Activated naive CD4-positive, alpha-beta T cell treated with anti-CD3 and anti-CD28 coated beads for 36 hours (primary cell): ENCODE measurements at regions of chr2 and their contacts with region 1.

Region 1: GRCh38 chr2:203814661-203815540 is 52.7 kb upstream of the CTLA4 start:
- DNase-seq: peak; percentile 77
- H3K4me3 Mint-ChIP-seq: peak overlapping the region; percentile 54
- H3K27ac Mint-ChIP-seq: no peak overlapping the region
- H3K4me1 Mint-ChIP-seq: peaks cover 54% of the 10 kb centered on the region
- H3K27me3 Mint-ChIP-seq: no peaks in the 10 kb centered on the region

Region 2: DNA sequence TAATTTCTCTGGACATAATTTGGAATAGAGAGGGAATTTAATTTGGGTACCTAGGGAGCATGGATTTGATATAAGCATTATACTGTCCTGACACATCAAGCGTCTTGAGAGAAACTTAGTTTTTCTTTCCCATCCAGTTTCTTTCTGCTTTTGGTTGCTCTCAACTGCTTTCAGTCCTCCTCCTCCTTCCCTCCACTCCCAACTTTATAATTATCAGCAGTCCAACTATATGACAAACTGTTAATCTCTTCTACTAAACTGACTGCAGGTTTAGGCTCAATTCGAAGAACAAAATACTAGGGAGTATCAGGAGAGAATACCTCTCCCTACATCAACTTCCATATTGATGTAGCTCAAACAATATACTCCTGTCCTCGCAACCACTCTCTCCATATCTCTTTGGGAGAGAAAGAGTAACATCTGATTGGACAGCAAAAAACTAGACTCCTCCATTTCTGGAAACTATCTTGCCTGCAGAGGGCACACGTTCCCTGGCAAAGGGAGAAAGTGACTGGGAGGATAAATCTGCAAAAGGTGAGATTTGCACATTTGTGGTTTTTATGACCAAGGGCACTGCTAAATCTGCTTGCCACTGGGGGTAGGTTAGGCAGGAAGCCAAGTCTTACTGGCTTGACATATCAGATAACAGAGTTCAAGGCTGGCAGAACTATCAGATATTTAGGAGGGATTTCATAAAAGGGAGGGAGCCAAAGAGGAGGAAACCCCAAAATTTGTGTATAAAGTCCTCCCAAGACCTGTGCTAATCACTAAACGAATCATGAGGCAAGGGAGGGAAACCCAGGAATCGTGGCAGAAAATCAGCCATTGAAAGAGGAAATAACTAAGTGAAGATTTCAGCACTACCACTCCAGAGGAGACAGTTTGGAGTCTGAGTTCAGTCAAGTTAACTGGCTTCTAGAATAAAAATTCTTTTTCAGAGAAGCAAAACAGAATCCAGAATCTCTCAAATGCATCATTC is 983.4 kb before region 1 on chr2:
- CTCF ChIA-PET with region 1: no interaction called
- intact Hi-C with region 1: loop called (anchors 1 kb)
- DNase-seq: peak; percentile 80
- H3K4me3 Mint-ChIP-seq: no peak overlapping the region
- H3K27ac Mint-ChIP-seq: no peak overlapping the region
- H3K4me1 Mint-ChIP-seq: peaks cover 10% of the 10 kb centered on the region
- H3K27me3 Mint-ChIP-seq: no peaks in the 10 kb centered on the region

Region 3: DNA sequence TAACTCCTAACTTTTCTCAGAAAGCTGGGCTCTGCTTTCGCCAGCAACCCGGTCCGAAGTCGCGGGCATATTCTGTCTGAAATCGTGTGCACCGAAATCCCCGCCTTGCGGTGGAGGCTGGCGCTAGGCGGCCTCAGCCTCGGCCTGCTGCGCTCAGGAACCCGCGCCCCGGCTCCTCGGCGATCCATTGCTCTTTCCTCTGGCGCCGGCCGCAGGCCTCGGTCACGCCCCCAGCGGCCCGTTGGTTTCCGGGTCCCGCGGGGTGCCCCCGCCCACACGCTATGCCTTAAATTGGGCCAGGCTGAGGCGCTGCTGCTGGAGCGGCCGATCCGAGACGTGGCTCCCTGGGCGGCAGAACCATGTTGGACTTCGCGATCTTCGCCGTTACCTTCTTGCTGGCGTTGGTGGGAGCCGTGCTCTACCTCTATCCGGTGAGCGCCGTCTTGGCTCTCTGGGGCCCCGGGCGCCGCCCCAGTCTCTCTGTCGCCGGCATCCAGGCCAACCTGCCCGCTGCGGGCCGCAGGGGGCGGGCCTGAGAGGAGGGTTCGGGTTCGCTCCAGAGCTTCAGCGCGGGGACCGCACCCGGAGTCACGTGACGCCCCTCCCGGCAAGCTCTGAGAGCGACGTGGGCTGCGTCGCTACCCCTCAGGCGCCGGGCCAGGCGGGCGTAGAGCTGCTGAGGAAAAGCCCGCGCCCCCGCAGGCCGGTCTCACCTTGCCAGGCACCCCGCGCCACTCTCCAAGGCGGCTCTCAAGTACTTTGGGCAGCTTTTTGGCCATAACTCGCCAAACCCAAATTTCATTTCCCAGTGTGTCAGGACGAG is 576.0 kb before region 1 on chr2 and contains the start of gene CYP20A1:
- CTCF ChIA-PET with region 1: interaction called, 3 read pairs
- intact Hi-C with region 1: loop called (anchors 2 kb)
- DNase-seq: peak; percentile 97
- H3K4me3 Mint-ChIP-seq: peak within 1 kb of the TSS; percentile 94
- H3K27ac Mint-ChIP-seq: peak within 1 kb of the TSS; percentile 98
- H3K4me1 Mint-ChIP-seq: peaks cover 35% of the 10 kb centered on the region
- H3K27me3 Mint-ChIP-seq: no peaks in the 10 kb centered on the region
- total RNA-seq, gene CYP20A1: 12.0 to 12.2 TPM

Region 4: GRCh38 chr2:203535078-203535783 is 279.7 kb before region 1 on chr2 and contains the start of gene RAPH1:
- CTCF ChIA-PET with region 1: interaction called, 4 read pairs
- intact Hi-C with region 1: loop called (anchors 2 kb)
- DNase-seq: peak; percentile 79
- H3K4me3 Mint-ChIP-seq: peak within 1 kb of the TSS; percentile 82
- H3K27ac Mint-ChIP-seq: peak within 1 kb of the TSS; percentile 61
- H3K4me1 Mint-ChIP-seq: peaks cover 21% of the 10 kb centered on the region
- H3K27me3 Mint-ChIP-seq: peaks cover 6% of the 10 kb centered on the region
- total RNA-seq, gene RAPH1: 8.6 to 11.9 TPM

Region 5: GRCh38 chr2:203669820-203670219 is 145.1 kb before region 1 on chr2:
- CTCF ChIA-PET with region 1: no interaction called
- intact Hi-C with region 1: no loop called
- DNase-seq: no peak
- H3K4me3 Mint-ChIP-seq: no peak overlapping the region
- H3K27ac Mint-ChIP-seq: no peak overlapping the region
- H3K4me1 Mint-ChIP-seq: peaks cover 14% of the 10 kb centered on the region
- H3K27me3 Mint-ChIP-seq: no peaks in the 10 kb centered on the region

Region 6: DNA sequence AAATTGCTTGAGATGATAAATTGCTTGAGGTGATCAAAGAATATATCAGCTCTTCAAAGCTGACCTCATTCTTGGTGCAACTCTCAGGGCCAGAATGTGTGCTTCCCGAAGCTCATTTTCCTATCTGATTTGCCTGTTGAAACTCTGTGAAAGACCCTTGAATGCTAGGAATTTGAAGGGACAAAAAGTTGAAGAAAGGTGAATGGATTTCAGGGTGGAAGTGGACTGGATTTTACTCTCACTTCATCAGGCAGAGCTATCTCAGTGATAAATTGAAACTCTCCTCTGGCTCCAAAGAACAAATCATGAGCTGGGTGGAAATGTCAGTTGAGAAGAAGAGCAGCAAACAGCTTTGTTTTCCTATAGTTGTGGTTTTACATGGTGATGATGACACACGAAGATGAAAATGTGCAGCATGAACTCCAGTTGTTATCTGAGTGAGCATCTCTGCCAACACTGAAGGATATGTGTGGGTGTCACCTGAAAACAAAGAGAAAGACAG is 74.1 kb before region 1 on chr2:
- CTCF ChIA-PET with region 1: interaction called, 22 read pairs
- intact Hi-C with region 1: loop called (anchors 1 kb)
- DNase-seq: peak; percentile 69
- H3K4me3 Mint-ChIP-seq: peak overlapping the region; percentile 54
- H3K27ac Mint-ChIP-seq: peak overlapping the region; percentile 97
- H3K4me1 Mint-ChIP-seq: peaks cover 88% of the 10 kb centered on the region
- H3K27me3 Mint-ChIP-seq: no peaks in the 10 kb centered on the region

Region 7: DNA sequence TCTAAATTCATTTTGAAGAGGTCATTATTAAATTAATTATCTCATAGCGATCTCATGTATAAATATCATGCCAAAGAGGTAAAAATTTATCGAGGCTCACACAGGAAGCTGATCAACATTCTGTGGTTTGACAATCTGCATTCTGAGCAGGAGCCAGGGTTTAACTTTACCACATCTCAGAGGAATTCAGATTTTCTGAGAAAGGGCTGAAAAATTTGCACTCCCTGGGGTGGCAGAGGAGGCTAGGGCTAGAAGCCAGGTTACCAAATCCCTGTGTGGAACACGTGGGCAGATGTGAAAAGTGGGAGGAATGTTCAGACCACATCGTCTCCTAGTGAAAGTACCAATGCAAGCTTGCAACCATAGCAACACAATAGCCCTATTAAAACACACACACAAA is 10.8 kb before region 1 on chr2:
- CTCF ChIA-PET with region 1: interaction called, 29 read pairs
- intact Hi-C with region 1: loop called (anchors 1 kb)
- DNase-seq: peak; percentile 55
- H3K4me3 Mint-ChIP-seq: no peak overlapping the region
- H3K27ac Mint-ChIP-seq: peak overlapping the region; percentile 27
- H3K4me1 Mint-ChIP-seq: peaks cover 75% of the 10 kb centered on the region
- H3K27me3 Mint-ChIP-seq: no peaks in the 10 kb centered on the region